Posterior vena cava (tissue), 2 donors: ENCODE measurements at regions of chr2 and their contacts with region 1.

Region 1: DNA sequence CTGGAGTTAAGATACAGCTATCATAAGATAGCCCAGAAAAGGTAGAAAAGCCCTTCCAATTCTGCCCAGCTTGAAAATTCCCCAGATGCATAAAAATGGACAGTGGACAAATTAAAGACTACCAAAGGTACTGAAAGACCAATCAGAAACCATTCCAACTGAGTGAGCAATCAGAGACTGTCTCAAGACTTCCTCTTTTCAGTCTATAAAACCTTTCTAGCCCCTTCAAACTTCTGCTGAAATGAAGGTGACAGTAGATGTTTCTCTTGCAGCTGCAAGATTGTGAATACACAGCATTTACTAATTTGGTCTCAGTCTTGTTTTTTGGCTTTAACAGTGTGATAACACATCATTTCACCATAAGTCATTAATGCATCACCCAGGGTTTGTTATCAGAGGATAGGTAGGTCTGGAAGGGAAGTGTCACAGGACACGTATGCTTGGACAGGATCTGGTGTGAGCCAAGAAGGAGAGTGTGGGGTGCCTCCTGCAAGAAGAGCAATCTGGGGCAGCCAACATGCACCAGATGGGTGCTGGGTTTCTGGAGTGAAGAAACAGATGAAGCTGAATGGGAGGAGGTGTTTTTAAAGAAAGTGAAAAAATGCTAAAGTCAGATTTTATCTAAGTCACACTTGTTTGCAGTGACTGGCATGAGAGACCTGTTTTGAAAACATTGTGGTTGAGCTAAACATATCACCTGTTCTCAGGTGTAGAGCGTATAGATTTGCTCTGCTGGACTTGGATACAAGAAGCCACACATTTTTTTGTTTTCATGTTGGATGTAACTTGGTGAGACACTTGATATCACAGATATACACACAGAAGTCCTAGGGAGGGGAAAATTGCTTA is 75.3 kb upstream of the DDX18 start:
- DNase-seq: no peak

Region 2: DNA sequence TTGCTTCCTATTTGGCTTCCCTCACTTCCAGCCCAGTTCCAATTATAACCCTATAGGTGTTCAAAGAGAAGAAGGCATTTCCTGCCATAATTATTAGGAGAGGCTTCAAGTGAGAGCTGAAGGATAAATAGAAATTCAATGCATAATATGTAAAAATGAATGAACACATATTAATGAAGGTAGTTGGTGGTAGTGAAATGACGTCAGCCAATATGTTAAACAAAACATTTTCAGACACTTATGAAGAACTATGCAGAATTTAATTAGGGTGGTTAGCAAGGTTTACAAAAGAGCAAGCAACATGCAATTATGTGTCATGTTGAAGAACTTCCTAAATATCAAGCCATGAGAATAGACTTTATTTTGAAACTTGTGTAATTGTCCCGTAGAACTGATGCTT is 783.6 kb before region 1 on chr2:
- intact Hi-C with region 1: loop called in 1 of 2 experiments (anchors 10 kb)
- DNase-seq: no peak